ENCODE measurements at regions of chr14 and their contacts with region 1.

Region 1: DNA sequence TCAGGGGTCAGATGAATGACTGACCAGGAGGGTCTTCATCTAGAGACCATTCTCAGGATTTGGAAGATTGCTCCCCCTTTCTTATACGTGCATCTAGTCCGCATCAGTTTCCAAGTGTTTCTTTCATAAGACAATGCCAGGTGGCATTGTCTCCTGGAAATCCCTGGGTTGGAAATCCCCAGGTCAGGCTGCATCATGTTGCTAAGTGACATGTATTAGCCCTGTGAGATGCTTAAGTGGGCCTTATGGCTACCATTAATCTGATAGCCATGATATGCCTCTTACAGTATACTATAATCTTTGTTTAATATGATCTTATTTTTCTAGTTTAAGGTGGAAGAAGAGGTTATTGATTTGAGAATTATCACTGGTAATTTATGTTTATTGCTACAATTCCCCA is 92.8 kb downstream of the DIO3 start:
- DNase-seq: no peak
- ATAC-seq: no peak
- H3K4me3 ChIP-seq: no peak overlapping the region
- H3K27ac ChIP-seq: no peak overlapping the region
- H3K4me1 ChIP-seq: no peaks in the 10 kb centered on the region
- H3K27me3 ChIP-seq: peaks cover 23% of the 10 kb centered on the region
- CTCF ChIP-seq: no peak
- POLR2A ChIP-seq: no peak
- RAD21 ChIP-seq: no peak

Region 2: GRCh38 chr14:101151226-101151926 is 502.7 kb before region 1 on chr14:
- CTCF ChIA-PET with region 1: no interaction called
- POLR2A ChIA-PET with region 1: no interaction called
- dilution Hi-C with region 1: no loop called
- in situ Hi-C with region 1: no loop called
- intact Hi-C with region 1: loop called (anchors 10 kb)
- DNase-seq: no peak
- ATAC-seq: no peak
- H3K4me3 ChIP-seq: no peak overlapping the region
- H3K27ac ChIP-seq: no peak overlapping the region
- H3K4me1 ChIP-seq: no peaks in the 10 kb centered on the region
- H3K27me3 ChIP-seq: peaks cover 31% of the 10 kb centered on the region
- CTCF ChIP-seq: no peak
- POLR2A ChIP-seq: no peak
- RAD21 ChIP-seq: no peak

Region 3: GRCh38 chr14:101689039-101689501 is 35.0 kb after region 1 on chr14:
- CTCF ChIA-PET with region 1: no interaction called
- POLR2A ChIA-PET with region 1: no interaction called
- dilution Hi-C with region 1: no loop called
- in situ Hi-C with region 1: no loop called
- intact Hi-C with region 1: no loop called
- DNase-seq: no peak
- ATAC-seq: no peak
- H3K4me3 ChIP-seq: no peak overlapping the region
- H3K27ac ChIP-seq: no peak overlapping the region
- H3K4me1 ChIP-seq: no peaks in the 10 kb centered on the region
- H3K27me3 ChIP-seq: peaks cover 13% of the 10 kb centered on the region
- CTCF ChIP-seq: no peak
- POLR2A ChIP-seq: no peak
- RAD21 ChIP-seq: no peak